ENCODE measurements at regions of chr2 and their contacts with region 1.

Region 1: DNA sequence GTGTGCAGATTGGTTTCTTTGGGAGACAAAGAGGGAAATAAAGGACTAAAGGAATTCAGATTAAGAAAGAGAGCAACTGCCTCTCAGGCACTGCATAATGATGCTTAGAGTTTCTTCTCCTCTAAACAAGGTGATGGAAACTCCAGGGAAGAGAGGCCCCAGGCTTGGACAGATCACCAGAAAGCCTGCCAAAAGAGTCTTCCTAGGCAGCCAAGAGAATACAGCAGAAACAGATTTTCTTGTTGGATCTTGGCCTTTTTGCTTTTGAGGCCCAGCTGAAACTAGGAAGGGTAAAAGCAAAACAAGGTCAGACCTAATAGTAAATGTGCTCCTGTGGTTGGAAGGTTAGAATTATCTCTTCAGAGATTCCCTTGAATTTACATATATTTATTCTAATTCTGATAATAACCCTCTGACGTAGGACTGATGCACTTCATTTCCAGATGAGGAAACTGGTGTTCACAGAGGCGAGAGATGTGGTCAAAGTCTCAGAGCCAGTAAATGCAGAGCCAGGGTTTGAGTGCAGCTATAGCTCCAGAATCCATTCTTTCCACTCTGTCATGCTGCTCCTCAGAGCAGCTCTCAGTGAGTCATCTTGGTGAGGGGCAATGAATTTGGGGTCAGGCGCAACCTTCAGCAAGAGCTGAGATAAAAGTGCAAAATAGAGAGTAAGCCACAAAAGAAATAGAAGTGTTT is 142.3 kb upstream of the FBXO11 start:
- DNase-seq: no peak

Region 2: GRCh38 chr2:47906157-47907038 is 142.2 kb before region 1 on chr2 and contains the start of gene FBXO11:
- in situ Hi-C with region 1: loop called (anchors 25 kb)
- DNase-seq: peak; percentile 99
- total RNA-seq, gene FBXO11: 34.4 and 38.2 TPM in 2 replicates